Gastrocnemius medialis (tissue), 4 donors: ENCODE measurements at regions of chr3 and their contacts with region 1.

Region 1: DNA sequence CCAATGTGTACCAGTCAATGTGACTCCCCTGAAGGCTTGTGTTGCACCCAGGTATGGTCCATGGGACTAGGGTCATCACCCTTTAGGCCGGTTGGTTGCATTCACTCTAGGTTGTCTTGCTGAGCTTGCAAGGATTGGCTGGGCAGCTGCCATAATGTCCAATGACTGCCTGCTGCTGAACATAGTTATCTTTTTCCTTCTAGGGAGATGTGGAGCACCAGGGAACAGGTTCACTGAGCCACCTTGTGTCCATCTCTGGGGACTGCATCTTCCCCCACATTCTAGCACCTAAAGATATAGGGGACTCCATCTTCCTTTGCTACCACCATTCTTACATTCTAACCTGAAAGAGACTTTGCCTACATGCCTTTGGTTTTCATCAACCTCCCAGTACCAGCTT is 580.4 kb upstream of the TBL1XR1 start:
- DNase-seq: peak; percentile 20 to 62
- ATAC-seq: peak; percentile 73 to 75
- H3K4me3 ChIP-seq: no peak overlapping the region
- H3K27ac ChIP-seq: no peak overlapping the region
- H3K4me1 ChIP-seq: peaks cover 26 to 31% of the 10 kb centered on the region in 2 donors
- H3K27me3 ChIP-seq: no peaks in the 10 kb centered on the region
- CTCF ChIP-seq: peak; percentile 62 to 83 (median 72)
- POLR2A ChIP-seq: no peak

Region 2: DNA sequence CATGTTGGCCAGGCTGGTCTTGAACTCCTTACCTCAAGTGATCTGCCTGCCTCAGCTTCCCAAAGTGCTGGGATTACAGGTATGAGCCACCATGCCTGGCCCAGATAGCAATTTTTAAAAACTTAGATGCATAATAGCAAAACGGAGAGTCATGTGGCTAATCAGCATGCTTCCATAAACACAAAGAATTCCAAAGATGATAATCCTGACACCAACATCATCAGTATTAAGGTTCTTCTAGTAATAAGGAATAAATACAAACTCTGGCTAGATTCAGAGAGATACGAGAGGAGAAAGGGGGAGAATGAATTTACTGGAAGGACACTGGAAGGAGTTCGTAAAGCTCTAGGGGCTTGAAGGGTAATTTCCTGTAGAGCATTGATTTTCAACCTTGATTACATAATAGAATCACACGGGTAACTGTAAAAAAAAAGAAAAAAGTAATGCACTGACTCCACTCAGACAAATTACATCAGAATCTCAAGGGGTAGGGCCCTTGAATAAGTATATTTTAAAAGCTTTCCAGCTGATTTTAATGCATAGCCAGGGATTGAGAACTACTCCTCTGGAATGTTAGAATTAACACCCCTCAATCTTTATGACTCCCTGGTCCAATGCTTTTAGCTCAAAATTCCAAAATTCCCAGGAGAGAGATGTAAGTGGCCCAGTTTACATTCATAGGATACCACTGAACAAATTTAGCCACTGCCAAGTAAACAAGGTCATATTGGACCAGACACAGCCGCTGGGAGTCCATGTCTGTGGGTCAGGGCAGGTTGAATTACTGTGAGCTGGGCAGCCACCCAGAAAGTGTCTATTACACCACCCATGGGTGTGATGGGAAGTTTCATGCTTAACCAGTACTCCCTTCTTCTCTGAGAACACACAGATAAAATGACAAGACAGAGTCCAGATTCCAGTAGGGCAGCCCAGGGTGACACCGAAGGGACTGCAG is 824.3 kb before region 1 on chr3:
- in situ Hi-C with region 1: no loop called
- intact Hi-C with region 1: loop called (anchors 2 kb)
- DNase-seq: peak; percentile 87 to 93
- ATAC-seq: peak; percentile 84 to 86
- H3K4me3 ChIP-seq: no peak overlapping the region
- H3K27ac ChIP-seq: peak overlapping the region; percentile 53 to 80 (median 68)
- H3K4me1 ChIP-seq: peaks cover 42% of the 10 kb centered on the region in 2 donors
- H3K27me3 ChIP-seq: no peaks in the 10 kb centered on the region
- CTCF ChIP-seq: no peak
- POLR2A ChIP-seq: no peak

Region 3: GRCh38 chr3:177050501-177051237 is 727.0 kb before region 1 on chr3:
- in situ Hi-C with region 1: loop called in 2 of 4 experiments (anchors 25 kb)
- intact Hi-C with region 1: loop called (anchors 2 kb)
- DNase-seq: no peak
- ATAC-seq: peak in 1 of 2 donors; percentile 84
- H3K4me3 ChIP-seq: no peak overlapping the region
- H3K27ac ChIP-seq: peak overlapping the region in 1 of 4 donors; percentile 3
- H3K4me1 ChIP-seq: peaks cover 6 to 11% of the 10 kb centered on the region in 2 donors
- H3K27me3 ChIP-seq: no peaks in the 10 kb centered on the region
- CTCF ChIP-seq: peak; percentile 50 to 71 (median 57)
- POLR2A ChIP-seq: no peak

Region 4: GRCh38 chr3:177597311-177598096 is 180.2 kb before region 1 on chr3:
- in situ Hi-C with region 1: no loop called
- intact Hi-C with region 1: loop called (anchors 5 kb)
- DNase-seq: peak; percentile 56 to 64
- ATAC-seq: peak; percentile 81 to 85
- H3K4me3 ChIP-seq: no peak overlapping the region
- H3K27ac ChIP-seq: peak overlapping the region; percentile 17 to 61 (median 24)
- H3K4me1 ChIP-seq: peaks cover 31 to 33% of the 10 kb centered on the region in 2 donors
- H3K27me3 ChIP-seq: no peaks in the 10 kb centered on the region
- CTCF ChIP-seq: no peak
- POLR2A ChIP-seq: no peak

Region 5: DNA sequence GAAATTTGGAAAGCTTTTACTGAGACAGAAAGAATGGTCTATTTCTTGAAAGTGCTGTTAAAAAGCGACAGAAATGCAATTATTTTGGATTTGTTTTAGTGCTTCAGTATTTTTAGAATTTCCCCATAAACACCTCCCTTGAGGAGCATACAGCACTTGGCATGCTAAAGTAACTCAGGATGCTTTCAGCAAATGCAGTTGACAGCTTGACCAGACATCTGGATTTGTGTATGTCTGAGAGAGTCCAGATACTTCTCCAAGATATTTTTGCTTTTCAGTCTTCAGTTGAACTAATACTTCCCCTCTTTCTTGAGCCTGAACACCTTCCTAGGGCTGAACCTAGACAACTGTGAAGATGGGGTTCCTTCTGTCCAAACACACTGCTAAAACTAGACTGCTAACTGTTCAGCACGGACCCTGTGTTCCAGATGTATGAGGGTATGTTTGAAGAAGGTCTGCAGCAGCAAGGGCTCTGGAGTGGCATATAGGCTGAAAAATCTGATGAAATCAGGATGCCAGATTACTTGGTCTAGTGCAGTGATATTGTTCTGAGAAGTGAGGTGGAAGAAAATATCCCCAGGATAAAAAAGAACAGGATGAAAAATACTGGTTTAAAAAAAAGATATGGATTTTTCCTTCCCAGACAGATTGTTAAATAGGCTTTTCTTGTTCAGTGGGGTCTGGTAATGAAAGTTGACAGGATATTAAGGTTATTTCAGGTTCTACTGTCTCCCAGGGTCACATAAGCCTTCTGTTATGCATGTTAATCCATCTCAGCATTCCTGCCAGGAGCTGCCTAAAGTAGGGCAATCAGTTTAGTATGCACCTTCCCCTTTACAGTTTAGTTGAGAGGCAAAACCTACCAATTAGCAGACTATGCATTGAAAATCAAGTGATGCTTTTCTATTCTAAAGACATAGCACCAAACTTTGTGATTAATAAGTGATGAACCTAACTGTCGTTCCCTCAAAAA is 63.5 kb before region 1 on chr3:
- in situ Hi-C with region 1: no loop called
- intact Hi-C with region 1: no loop called
- DNase-seq: no peak
- ATAC-seq: peak; percentile 24 to 32
- H3K4me3 ChIP-seq: no peak overlapping the region
- H3K27ac ChIP-seq: no peak overlapping the region
- H3K4me1 ChIP-seq: peaks cover 15 to 16% of the 10 kb centered on the region in 2 donors
- H3K27me3 ChIP-seq: no peaks in the 10 kb centered on the region
- CTCF ChIP-seq: no peak
- POLR2A ChIP-seq: no peak

Region 6: GRCh38 chr3:177835008-177835407 is 57.3 kb after region 1 on chr3:
- in situ Hi-C with region 1: no loop called
- intact Hi-C with region 1: loop called (anchors 2 kb)
- DNase-seq: no peak
- ATAC-seq: no peak
- H3K4me3 ChIP-seq: no peak overlapping the region
- H3K27ac ChIP-seq: no peak overlapping the region
- H3K4me1 ChIP-seq: peaks cover 3 to 11% of the 10 kb centered on the region in 2 donors
- H3K27me3 ChIP-seq: no peaks in the 10 kb centered on the region
- CTCF ChIP-seq: no peak
- POLR2A ChIP-seq: no peak

Region 7: GRCh38 chr3:177893321-177893720 is 115.6 kb after region 1 on chr3:
- in situ Hi-C with region 1: no loop called
- intact Hi-C with region 1: no loop called
- DNase-seq: no peak
- ATAC-seq: peak; percentile 56 to 79
- H3K4me3 ChIP-seq: no peak overlapping the region
- H3K27ac ChIP-seq: peak overlapping the region in 1 of 4 donors; percentile 1
- H3K4me1 ChIP-seq: peaks cover 0 to 10% of the 10 kb centered on the region in 2 donors
- H3K27me3 ChIP-seq: no peaks in the 10 kb centered on the region
- CTCF ChIP-seq: peak in 1 of 5 experiments; percentile 19
- POLR2A ChIP-seq: no peak

Region 8: GRCh38 chr3:178140531-178141304 is 363.0 kb after region 1 on chr3:
- in situ Hi-C with region 1: no loop called
- intact Hi-C with region 1: no loop called
- DNase-seq: no peak
- ATAC-seq: no peak
- H3K4me3 ChIP-seq: no peak overlapping the region
- H3K27ac ChIP-seq: no peak overlapping the region
- H3K4me1 ChIP-seq: no peaks in the 10 kb centered on the region
- H3K27me3 ChIP-seq: no peaks in the 10 kb centered on the region
- CTCF ChIP-seq: no peak
- POLR2A ChIP-seq: no peak